ENCODE measurements at regions of chrX and their contacts with region 1.

Region 1: GRCh38 chrX:45849253-45849862 is 648.7 kb upstream of the DIPK2B start:
- DNase-seq: peak; percentile 85
- ATAC-seq: peak; percentile 32
- H3K4me3 ChIP-seq: peak overlapping the region; percentile 79
- H3K27ac ChIP-seq: peak overlapping the region; percentile 83
- H3K4me1 ChIP-seq: peaks cover 49% of the 10 kb centered on the region
- H3K27me3 ChIP-seq: no peaks in the 10 kb centered on the region
- CTCF ChIP-seq: peak; percentile 67

Region 2: DNA sequence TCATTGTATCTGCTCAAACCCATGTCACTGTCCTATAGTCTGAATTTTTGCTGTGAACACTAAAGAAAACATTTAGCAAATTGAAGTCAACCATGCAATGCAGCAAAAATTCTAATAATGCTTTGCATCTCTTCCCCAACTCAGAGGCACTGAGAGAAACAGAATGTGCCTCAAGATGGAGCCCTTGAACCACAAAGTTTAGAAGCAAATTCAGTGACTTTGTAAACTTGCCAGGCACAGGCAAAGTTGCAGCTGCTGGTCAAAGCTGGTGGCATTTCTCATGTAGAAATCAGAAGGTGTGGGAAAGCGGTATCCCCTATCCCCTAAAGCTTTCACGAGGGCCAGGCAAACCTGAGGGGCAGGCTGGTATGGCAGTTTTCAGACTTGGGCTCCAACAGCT is 527.0 kb before region 1 on chrX:
- CTCF ChIA-PET with region 1: no interaction called
- POLR2A ChIA-PET with region 1: no interaction called
- intact Hi-C with region 1: loop called (anchors 5 kb)
- DNase-seq: peak; percentile 92
- ATAC-seq: peak; percentile 78
- H3K4me3 ChIP-seq: no peak overlapping the region
- H3K27ac ChIP-seq: peak overlapping the region; percentile 99
- H3K4me1 ChIP-seq: peaks cover 28% of the 10 kb centered on the region
- H3K27me3 ChIP-seq: no peaks in the 10 kb centered on the region
- CTCF ChIP-seq: peak; percentile 77

Region 3: DNA sequence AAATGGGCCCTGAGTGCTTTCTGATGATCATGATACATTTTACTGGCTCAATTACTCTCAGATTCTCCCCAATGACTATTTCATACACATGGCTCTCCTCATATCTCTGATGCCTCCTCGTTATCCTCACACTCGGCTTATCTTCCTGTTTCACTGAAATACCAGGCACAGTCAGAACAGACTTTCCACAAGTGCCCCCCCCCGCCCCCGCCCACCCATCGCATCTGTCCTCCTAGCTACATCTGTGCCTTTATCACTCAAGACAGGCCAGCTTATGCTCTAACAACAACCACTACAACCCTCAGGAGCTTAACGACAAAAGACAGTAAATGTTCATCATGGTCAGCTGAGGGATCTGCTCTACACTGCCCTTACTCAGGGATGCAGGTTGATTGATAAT is 38.0 kb before region 1 on chrX:
- CTCF ChIA-PET with region 1: no interaction called
- POLR2A ChIA-PET with region 1: no interaction called
- intact Hi-C with region 1: no loop called
- DNase-seq: no peak
- ATAC-seq: no peak
- H3K4me3 ChIP-seq: no peak overlapping the region
- H3K27ac ChIP-seq: no peak overlapping the region
- H3K4me1 ChIP-seq: 0 out of 2 replicates have a peak, but pooled peaks cover 5% of the 10 kb centered on the region
- H3K27me3 ChIP-seq: no peaks in the 10 kb centered on the region
- CTCF ChIP-seq: no peak

Region 4: GRCh38 chrX:45824471-45824870 is 24.9 kb before region 1 on chrX:
- CTCF ChIA-PET with region 1: interaction called, 3 read pairs
- POLR2A ChIA-PET with region 1: interaction called, 6 read pairs
- intact Hi-C with region 1: loop called (anchors 2 kb)
- DNase-seq: peak; percentile 96
- ATAC-seq: peak; percentile 96
- H3K4me3 ChIP-seq: no peak overlapping the region
- H3K27ac ChIP-seq: peak overlapping the region; percentile 71
- H3K4me1 ChIP-seq: peaks cover 33% of the 10 kb centered on the region
- H3K27me3 ChIP-seq: no peaks in the 10 kb centered on the region
- CTCF ChIP-seq: peak; percentile 91

Region 5: GRCh38 chrX:45889471-45889870 is 40.1 kb after region 1 on chrX:
- CTCF ChIA-PET with region 1: no interaction called
- POLR2A ChIA-PET with region 1: no interaction called
- intact Hi-C with region 1: no loop called
- DNase-seq: peak; percentile 69
- ATAC-seq: peak; percentile 89
- H3K4me3 ChIP-seq: no peak overlapping the region
- H3K27ac ChIP-seq: peak overlapping the region; percentile 50
- H3K4me1 ChIP-seq: peaks cover 5% of the 10 kb centered on the region
- H3K27me3 ChIP-seq: no peaks in the 10 kb centered on the region
- CTCF ChIP-seq: no peak

Region 6: GRCh38 chrX:46125111-46125510 is 275.8 kb after region 1 on chrX:
- CTCF ChIA-PET with region 1: no interaction called
- POLR2A ChIA-PET with region 1: no interaction called
- intact Hi-C with region 1: no loop called
- DNase-seq: no peak
- ATAC-seq: no peak
- H3K4me3 ChIP-seq: no peak overlapping the region
- H3K27ac ChIP-seq: no peak overlapping the region
- H3K4me1 ChIP-seq: peaks cover 8% of the 10 kb centered on the region; the same call in 1 of the 2 replicates
- H3K27me3 ChIP-seq: no peaks in the 10 kb centered on the region
- CTCF ChIP-seq: no peak

Region 7: DNA sequence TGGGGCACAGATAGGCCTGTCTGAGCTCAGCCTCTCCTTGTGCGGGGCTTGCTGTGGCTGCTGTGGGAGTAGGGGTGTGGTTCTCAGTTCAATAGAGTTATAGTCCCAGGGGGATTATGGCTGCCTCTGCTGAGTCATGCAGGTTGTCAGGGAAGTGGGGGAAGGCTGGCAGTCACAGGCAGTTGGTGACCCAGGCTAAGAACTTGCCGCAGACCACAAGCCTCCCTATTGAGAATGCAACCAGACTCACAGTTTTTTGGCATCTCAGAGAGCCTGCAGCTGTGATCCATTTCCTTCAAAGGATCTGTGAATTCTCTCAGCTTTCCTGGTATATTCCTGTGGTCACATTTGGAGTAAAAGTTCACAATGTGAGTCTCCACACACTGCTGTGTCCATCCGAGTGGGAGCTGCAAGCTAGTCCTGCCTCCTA is 330.9 kb after region 1 on chrX:
- CTCF ChIA-PET with region 1: no interaction called
- POLR2A ChIA-PET with region 1: no interaction called
- intact Hi-C with region 1: loop called (anchors 5 kb)
- DNase-seq: peak; percentile 52
- ATAC-seq: no peak; the same call in 1 of the 2 replicates
- H3K4me3 ChIP-seq: no peak overlapping the region
- H3K27ac ChIP-seq: peak overlapping the region; percentile 37
- H3K4me1 ChIP-seq: peaks cover 30% of the 10 kb centered on the region
- H3K27me3 ChIP-seq: no peaks in the 10 kb centered on the region
- CTCF ChIP-seq: no peak

Region 8: DNA sequence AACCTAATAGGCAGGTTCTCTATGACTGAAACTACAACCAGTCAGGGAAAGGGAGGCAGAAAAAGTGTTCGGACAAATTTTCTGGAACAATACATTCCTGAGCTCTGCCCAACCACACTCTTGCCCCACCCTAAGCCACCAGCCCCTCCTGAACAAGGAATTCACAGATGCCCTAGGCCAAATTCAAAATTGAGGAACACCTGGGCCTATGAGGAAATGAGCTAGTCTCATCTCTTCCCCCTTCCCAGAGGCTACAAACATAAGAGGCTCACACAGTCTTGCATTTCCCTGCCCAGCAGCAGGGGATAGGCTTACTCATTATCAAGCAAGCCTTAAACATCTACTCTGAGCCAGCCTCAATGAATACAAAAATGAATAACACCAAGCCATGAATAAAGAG is 411.2 kb after region 1 on chrX:
- CTCF ChIA-PET with region 1: no interaction called
- POLR2A ChIA-PET with region 1: no interaction called
- intact Hi-C with region 1: loop called (anchors 5 kb)
- DNase-seq: peak; percentile 95
- ATAC-seq: peak; percentile 82
- H3K4me3 ChIP-seq: no peak overlapping the region
- H3K27ac ChIP-seq: peak overlapping the region; percentile 91
- H3K4me1 ChIP-seq: peaks cover 58% of the 10 kb centered on the region
- H3K27me3 ChIP-seq: no peaks in the 10 kb centered on the region
- CTCF ChIP-seq: no peak

Region 9: DNA sequence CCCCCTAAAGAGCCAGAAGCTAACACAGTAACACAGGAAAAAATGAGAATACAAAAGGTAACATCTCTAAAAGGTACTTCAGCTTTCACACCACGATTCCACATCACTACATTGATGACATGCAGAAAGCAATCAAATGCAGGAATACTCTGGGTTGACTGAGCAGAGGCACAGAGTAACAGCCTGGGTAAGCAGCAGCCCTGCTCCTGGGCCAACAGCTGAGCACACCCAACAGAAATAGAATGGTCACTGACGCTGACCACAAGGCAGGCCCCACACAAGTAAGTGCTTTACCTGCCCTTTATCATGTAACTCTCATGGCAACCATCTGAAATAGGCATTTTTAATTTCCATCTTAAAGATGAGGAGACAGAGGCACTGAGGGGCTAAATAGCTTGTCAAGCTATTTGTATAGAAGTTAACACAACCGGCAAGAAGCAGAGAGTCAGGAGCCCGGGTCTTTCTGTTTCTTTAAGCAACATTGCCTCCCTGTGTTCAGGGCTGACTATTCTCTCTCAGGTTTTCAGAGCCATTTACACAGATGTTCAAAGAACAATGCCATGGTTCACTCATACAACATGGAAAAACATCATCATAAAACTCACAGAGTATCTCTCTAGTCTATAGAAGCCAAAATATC is 527.0 kb after region 1 on chrX:
- CTCF ChIA-PET with region 1: interaction called, 4 read pairs
- POLR2A ChIA-PET with region 1: no interaction called
- intact Hi-C with region 1: loop called (anchors 5 kb)
- DNase-seq: peak; percentile 79
- ATAC-seq: peak; percentile 88
- H3K4me3 ChIP-seq: no peak overlapping the region
- H3K27ac ChIP-seq: peak overlapping the region; percentile 79
- H3K4me1 ChIP-seq: peaks cover 26% of the 10 kb centered on the region
- H3K27me3 ChIP-seq: no peaks in the 10 kb centered on the region
- CTCF ChIP-seq: peak; percentile 76

Measured in PC-3 (cell line).